T-cell (primary cell): ENCODE measurements at regions of chr1 and their contacts with region 1.

Region 1: GRCh38 chr1:173114346-173114745 is 63.6 kb upstream of the TNFSF18 start:
- DNase-seq: no peak
- ATAC-seq: no peak
- H3K4me3 ChIP-seq: no peak overlapping the region
- H3K4me3 Mint-ChIP-seq: no peak overlapping the region
- H3K27ac ChIP-seq: no peak overlapping the region
- H3K27ac Mint-ChIP-seq: no peak overlapping the region
- H3K4me1 ChIP-seq: no peaks in the 10 kb centered on the region
- H3K4me1 Mint-ChIP-seq: peaks cover 0 to 2% (median 0%) of the 10 kb centered on the region in 3 donors
- H3K27me3 ChIP-seq: no peaks in the 10 kb centered on the region
- H3K27me3 Mint-ChIP-seq: peaks cover 0 to 8% of the 10 kb centered on the region in 2 donors

Region 2: DNA sequence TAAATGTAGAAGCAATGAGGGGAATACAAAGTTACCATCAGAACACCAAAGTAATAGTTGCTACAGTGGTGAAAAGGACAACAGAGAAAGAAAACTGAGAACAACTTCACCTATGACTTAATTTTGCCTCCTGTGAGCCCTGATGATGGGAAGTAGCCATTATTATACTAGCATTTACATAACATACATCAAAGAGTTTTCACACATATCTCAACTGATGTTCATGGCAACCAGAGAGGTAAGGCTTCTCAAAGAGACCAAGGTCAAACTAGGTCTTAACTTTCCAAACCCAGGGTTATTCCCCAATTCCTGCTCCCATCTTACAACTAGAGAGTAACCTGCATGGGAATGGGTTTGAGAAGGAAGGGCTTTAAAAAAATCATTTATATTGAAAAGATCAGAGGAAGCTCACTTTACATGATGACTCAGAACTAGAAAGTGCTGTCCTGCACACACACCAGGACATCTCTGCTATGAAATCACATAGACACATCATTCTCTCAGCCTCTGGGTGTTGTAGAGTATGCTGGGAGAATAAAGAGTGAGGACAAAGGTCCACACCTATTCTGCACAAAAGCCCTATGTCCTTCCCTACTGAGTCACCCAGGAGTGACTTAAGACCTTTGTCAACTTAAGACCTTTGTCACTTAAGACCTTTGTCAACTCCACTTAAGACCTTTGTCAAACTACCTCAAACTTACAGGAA is 243.3 kb before region 1 on chr1:
- CTCF ChIA-PET with region 1: no interaction called
- POLR2A ChIA-PET with region 1: no interaction called
- DNase-seq: no peak
- ATAC-seq: peak in 2 of 4 experiments; percentile 57 to 70
- H3K4me3 ChIP-seq: no peak overlapping the region
- H3K4me3 Mint-ChIP-seq: no peak overlapping the region
- H3K27ac ChIP-seq: no peak overlapping the region
- H3K27ac Mint-ChIP-seq: peak overlapping the region in 1 of 2 donors; percentile 3
- H3K4me1 ChIP-seq: peaks cover 0 to 6% of the 10 kb centered on the region in 2 experiments
- H3K4me1 Mint-ChIP-seq: peaks cover 32 to 34% (median 33%) of the 10 kb centered on the region in 3 donors
- H3K27me3 ChIP-seq: no peaks in the 10 kb centered on the region
- H3K27me3 Mint-ChIP-seq: no peaks in the 10 kb centered on the region

Region 3: GRCh38 chr1:173042806-173043205 is 71.5 kb before region 1 on chr1:
- CTCF ChIA-PET with region 1: no interaction called
- POLR2A ChIA-PET with region 1: interaction called in 1 of 2 experiments, 11 read pairs
- DNase-seq: no peak
- ATAC-seq: no peak
- H3K4me3 ChIP-seq: no peak overlapping the region
- H3K4me3 Mint-ChIP-seq: no peak overlapping the region
- H3K27ac ChIP-seq: no peak overlapping the region
- H3K27ac Mint-ChIP-seq: no peak overlapping the region
- H3K4me1 ChIP-seq: no peaks in the 10 kb centered on the region
- H3K4me1 Mint-ChIP-seq: peaks cover 13 to 17% (median 14%) of the 10 kb centered on the region in 3 donors
- H3K27me3 ChIP-seq: no peaks in the 10 kb centered on the region
- H3K27me3 Mint-ChIP-seq: no peaks in the 10 kb centered on the region